CD14-positive monocyte (primary cell): ENCODE measurements at regions of chr10 and their contacts with region 1.

Region 1: GRCh38 chr10:29735596-29736318 is 101.0 kb upstream of the SVIL start:
- DNase-seq: peak; percentile 74 to 85 (median 84)
- H3K4me3 ChIP-seq: peak overlapping the region; percentile 74 to 91 (median 78)
- H3K4me3 Mint-ChIP-seq: peak overlapping the region; percentile 87 to 90
- H3K27ac ChIP-seq: peak overlapping the region; percentile 89 to 93
- H3K27ac Mint-ChIP-seq: peak overlapping the region; percentile 80 to 93 (median 90)
- H3K4me1 ChIP-seq: peaks cover 29 to 43% of the 10 kb centered on the region in 2 donors
- H3K4me1 Mint-ChIP-seq: peaks cover 45% of the 10 kb centered on the region
- H3K27me3 ChIP-seq: peaks cover 0 to 9% of the 10 kb centered on the region in 2 donors
- H3K27me3 Mint-ChIP-seq: peaks cover 5 to 16% (median 11%) of the 10 kb centered on the region in 3 donors
- CTCF ChIP-seq: peak; percentile 96

Region 2: GRCh38 chr10:29555746-29556481 is 179.8 kb before region 1 on chr10:
- intact Hi-C with region 1: loop called in 1 of 2 experiments (anchors 10 kb)
- DNase-seq: peak in 2 of 3 donors; percentile 10 to 18
- H3K4me3 ChIP-seq: no peak overlapping the region
- H3K4me3 Mint-ChIP-seq: no peak overlapping the region
- H3K27ac ChIP-seq: peak overlapping the region in 1 of 2 donors; percentile 65
- H3K27ac Mint-ChIP-seq: peak overlapping the region; percentile 38 to 87 (median 74)
- H3K4me1 ChIP-seq: peaks cover 8 to 20% of the 10 kb centered on the region in 2 donors
- H3K4me1 Mint-ChIP-seq: peaks cover 24% of the 10 kb centered on the region
- H3K27me3 ChIP-seq: no peaks in the 10 kb centered on the region
- H3K27me3 Mint-ChIP-seq: peaks cover 0 to 2% (median 0%) of the 10 kb centered on the region in 3 donors
- CTCF ChIP-seq: no peak

Region 3: DNA sequence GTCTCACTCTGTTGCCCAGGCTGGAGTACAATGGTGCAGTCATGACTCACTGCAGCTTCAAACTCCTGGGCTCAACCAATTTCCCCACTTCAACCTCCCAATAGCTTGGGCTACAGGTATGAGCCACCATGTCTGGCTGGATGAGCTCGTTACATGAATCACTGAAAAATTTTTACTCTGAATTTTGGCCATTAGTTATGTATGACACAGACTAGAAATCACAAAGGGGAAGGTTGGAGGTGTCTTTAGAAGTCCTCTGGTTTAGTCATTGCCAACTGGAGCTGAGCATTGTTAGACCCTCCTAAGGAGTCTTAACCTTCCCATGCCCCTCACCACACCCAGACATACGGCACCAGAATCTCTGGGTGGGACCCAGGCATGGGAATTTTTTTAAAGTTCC is 135.7 kb before region 1 on chr10:
- intact Hi-C with region 1: loop called in 1 of 2 experiments (anchors 10 kb)
- DNase-seq: peak in 1 of 3 donors; percentile 32
- H3K4me3 ChIP-seq: no peak overlapping the region
- H3K4me3 Mint-ChIP-seq: no peak overlapping the region
- H3K27ac ChIP-seq: no peak overlapping the region
- H3K27ac Mint-ChIP-seq: no peak overlapping the region
- H3K4me1 ChIP-seq: peaks cover 20 to 22% of the 10 kb centered on the region in 2 donors
- H3K4me1 Mint-ChIP-seq: peaks cover 21% of the 10 kb centered on the region
- H3K27me3 ChIP-seq: no peaks in the 10 kb centered on the region
- H3K27me3 Mint-ChIP-seq: no peaks in the 10 kb centered on the region
- CTCF ChIP-seq: no peak

Region 4: DNA sequence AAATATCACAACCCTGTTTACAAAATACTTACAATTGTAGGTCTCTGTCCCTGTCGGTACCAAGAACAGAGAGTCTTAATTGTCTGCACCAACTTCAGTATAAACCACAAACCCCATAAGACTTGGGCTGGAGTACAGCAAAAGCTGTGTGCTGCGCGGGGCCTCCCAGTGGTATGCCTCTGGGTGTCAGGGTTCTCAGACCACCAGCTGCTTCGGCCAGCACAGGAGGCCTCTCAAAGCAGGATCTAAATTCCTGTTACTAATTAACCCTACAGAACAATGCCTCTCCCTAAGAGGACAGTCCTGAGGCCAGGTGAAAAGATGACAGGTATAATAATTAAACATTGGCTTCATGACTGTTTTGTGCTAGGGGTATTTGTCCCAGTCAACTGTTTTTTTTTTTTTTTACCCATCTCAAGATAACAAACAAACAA is 100.0 kb before region 1 on chr10:
- intact Hi-C with region 1: loop called (anchors 5 to 10 kb)
- DNase-seq: no peak
- H3K4me3 ChIP-seq: peak overlapping the region in 1 of 3 experiments; percentile 35
- H3K4me3 Mint-ChIP-seq: peak overlapping the region in 1 of 2 donors; percentile 76
- H3K27ac ChIP-seq: peak overlapping the region; percentile 47 to 85
- H3K27ac Mint-ChIP-seq: peak overlapping the region; percentile 81 to 98 (median 93)
- H3K4me1 ChIP-seq: peaks cover 35 to 48% of the 10 kb centered on the region in 2 donors
- H3K4me1 Mint-ChIP-seq: peaks cover 55% of the 10 kb centered on the region
- H3K27me3 ChIP-seq: no peaks in the 10 kb centered on the region
- H3K27me3 Mint-ChIP-seq: no peaks in the 10 kb centered on the region
- CTCF ChIP-seq: no peak

Region 5: GRCh38 chr10:29658984-29659965 is 76.5 kb before region 1 on chr10:
- intact Hi-C with region 1: loop called in 1 of 2 experiments (anchors 1 kb)
- DNase-seq: peak; percentile 97 to 100 (median 100)
- H3K4me3 ChIP-seq: peak overlapping the region in 2 of 3 experiments; percentile 14 to 38
- H3K4me3 Mint-ChIP-seq: peak overlapping the region; percentile 17 to 77
- H3K27ac ChIP-seq: peak overlapping the region; percentile 81 to 92
- H3K27ac Mint-ChIP-seq: peak overlapping the region; percentile 94 to 99 (median 97)
- H3K4me1 ChIP-seq: peaks cover 32 to 36% of the 10 kb centered on the region in 2 donors
- H3K4me1 Mint-ChIP-seq: peaks cover 40% of the 10 kb centered on the region
- H3K27me3 ChIP-seq: no peaks in the 10 kb centered on the region
- H3K27me3 Mint-ChIP-seq: no peaks in the 10 kb centered on the region
- CTCF ChIP-seq: peak; percentile 58

Region 6: DNA sequence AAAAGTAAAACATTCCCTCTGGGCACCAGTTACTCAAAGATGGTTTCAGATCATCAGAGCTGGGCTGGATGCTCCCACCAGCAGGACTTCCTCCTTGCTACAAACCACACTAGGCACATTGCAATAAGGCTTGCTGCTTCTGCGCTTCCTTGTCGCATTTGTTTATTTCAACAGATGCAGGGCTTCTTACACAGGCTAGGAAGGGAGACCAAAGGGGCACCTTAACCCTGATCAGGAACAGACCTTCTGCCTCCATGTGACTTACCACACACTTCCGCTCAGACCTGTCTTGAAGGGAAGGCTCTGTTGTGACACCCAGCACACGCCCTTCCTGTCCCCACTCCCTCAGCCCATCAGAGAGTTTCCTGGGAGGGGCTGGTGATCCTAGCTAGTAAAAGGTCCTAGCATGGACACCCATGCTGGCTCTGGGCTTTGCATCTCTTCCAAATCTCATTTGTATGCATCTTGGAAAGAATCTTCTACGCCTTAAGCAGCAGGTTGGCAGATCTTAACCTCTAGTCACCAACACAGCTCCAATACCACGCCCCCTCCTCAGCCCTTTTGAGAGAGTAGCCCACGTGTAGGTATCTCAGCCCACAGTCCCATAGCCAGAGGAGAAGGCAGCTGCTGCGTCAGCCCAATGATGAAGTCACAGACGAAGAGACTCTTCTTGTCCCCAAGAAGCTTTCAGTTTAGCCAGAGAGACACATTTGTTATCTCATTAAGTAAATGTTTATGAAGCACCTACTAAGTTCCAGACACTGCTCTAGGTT is 53.9 kb before region 1 on chr10:
- intact Hi-C with region 1: loop called (anchors 2 to 10 kb)
- DNase-seq: peak; percentile 96 to 98 (median 96)
- H3K4me3 ChIP-seq: peak overlapping the region in 1 of 3 experiments; percentile 55
- H3K4me3 Mint-ChIP-seq: peak overlapping the region; percentile 54 to 84
- H3K27ac ChIP-seq: peak overlapping the region; percentile 88 to 98
- H3K27ac Mint-ChIP-seq: peak overlapping the region; percentile 97 to 100 (median 98)
- H3K4me1 ChIP-seq: peaks cover 57 to 64% of the 10 kb centered on the region in 2 donors
- H3K4me1 Mint-ChIP-seq: peaks cover 67% of the 10 kb centered on the region
- H3K27me3 ChIP-seq: no peaks in the 10 kb centered on the region
- H3K27me3 Mint-ChIP-seq: peaks cover 0 to 3% (median 2%) of the 10 kb centered on the region in 3 donors
- CTCF ChIP-seq: no peak

Region 7: GRCh38 chr10:29689001-29689400 is 46.8 kb before region 1 on chr10:
- intact Hi-C with region 1: loop called in 1 of 2 experiments (anchors 10 kb)
- DNase-seq: peak; percentile 64 to 84 (median 82)
- H3K4me3 ChIP-seq: peak overlapping the region in 1 of 3 experiments; percentile 62
- H3K4me3 Mint-ChIP-seq: peak overlapping the region; percentile 34 to 39
- H3K27ac ChIP-seq: peak overlapping the region; percentile 70 to 96
- H3K27ac Mint-ChIP-seq: peak overlapping the region; percentile 92 to 99 (median 95)
- H3K4me1 ChIP-seq: peaks cover 36 to 49% of the 10 kb centered on the region in 2 donors
- H3K4me1 Mint-ChIP-seq: peaks cover 50% of the 10 kb centered on the region
- H3K27me3 ChIP-seq: no peaks in the 10 kb centered on the region
- H3K27me3 Mint-ChIP-seq: no peaks in the 10 kb centered on the region
- CTCF ChIP-seq: no peak